WTC11 (cell line): ENCODE measurements at regions of chr15 and their contacts with region 1.

Region 1: DNA sequence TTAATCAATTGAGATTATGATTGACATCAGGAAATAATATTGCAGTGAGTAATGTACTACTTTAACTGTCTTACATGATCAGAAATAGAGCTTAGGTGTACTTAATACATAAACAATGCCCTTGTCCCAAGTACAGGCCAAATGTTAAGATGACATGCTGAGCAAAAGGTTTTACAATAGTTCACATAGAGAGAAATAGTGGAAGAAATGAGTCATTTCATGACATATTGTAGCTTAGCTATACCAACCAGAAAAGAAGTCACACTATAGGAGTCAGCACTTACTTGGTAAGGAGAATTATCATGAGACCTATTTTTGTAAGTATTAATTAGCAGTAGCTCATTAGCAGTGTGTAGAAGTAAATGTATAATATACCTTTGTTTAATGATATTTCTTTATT is 96.4 kb upstream of the NANOGP8 start:
- DNase-seq: no peak
- ATAC-seq: no peak
- H3K4me3 Mint-ChIP-seq: no peak overlapping the region
- H3K27ac Mint-ChIP-seq: no peak overlapping the region; the same call in 1 of the 2 replicates
- H3K4me1 Mint-ChIP-seq: peaks cover 63% of the 10 kb centered on the region
- H3K27me3 Mint-ChIP-seq: peaks cover 11% of the 10 kb centered on the region
- CTCF ChIP-seq: no peak

Region 2: DNA sequence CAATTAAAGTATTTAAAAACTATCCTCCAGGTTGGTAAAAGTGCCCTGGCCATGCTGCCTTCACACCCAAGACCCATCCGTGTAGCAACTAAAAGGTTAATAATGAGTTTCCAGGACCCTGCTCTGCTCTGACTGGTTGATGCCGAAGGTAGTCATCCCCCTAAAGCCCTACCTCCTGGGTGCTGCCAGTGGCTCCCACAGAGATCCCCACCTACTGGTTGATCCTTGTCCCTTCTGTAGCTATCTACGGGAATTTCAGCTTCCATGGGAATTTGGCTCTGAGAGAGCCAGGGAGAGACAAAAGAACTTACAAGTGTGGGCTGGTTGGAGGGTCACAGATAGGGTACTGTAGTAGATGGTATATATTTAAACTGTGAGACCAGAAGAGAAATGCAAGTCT is 14.1 kb after region 1 on chr15:
- CTCF ChIA-PET with region 1: interaction called, 16 read pairs
- POLR2A ChIA-PET with region 1: no interaction called
- DNase-seq: peak; percentile 21
- ATAC-seq: peak; percentile 97
- H3K4me3 Mint-ChIP-seq: no peak overlapping the region
- H3K27ac Mint-ChIP-seq: peak overlapping the region; percentile 46; the same call in 1 of the 2 replicates
- H3K4me1 Mint-ChIP-seq: peaks cover 33% of the 10 kb centered on the region
- H3K27me3 Mint-ChIP-seq: peaks cover 7% of the 10 kb centered on the region; the same call in 1 of the 2 replicates
- CTCF ChIP-seq: no peak

Region 3: DNA sequence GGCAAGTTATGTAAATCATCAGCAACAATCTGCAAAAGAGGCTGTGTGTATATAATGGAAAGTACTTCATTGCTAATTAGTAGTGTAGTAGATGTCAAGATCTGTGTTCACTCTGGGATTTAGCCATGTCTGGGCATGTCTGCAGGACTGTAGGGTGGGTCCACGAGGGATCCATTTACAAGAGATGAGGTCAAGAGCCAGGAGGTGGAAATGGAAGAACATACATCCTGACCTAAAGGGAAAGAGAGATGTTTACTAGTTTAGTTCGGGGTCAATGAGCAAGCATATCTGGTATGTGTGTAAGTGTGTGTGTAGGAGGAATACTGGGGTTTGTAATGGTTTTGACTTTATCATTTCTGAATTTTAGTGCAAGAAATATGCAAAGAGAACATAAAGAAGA is 75.0 kb after region 1 on chr15:
- CTCF ChIA-PET with region 1: no interaction called
- POLR2A ChIA-PET with region 1: no interaction called
- DNase-seq: no peak
- ATAC-seq: no peak
- H3K4me3 Mint-ChIP-seq: no peak overlapping the region
- H3K27ac Mint-ChIP-seq: peak overlapping the region; percentile 89
- H3K4me1 Mint-ChIP-seq: peaks cover 76% of the 10 kb centered on the region
- H3K27me3 Mint-ChIP-seq: no peaks in the 10 kb centered on the region
- CTCF ChIP-seq: no peak

Region 4: DNA sequence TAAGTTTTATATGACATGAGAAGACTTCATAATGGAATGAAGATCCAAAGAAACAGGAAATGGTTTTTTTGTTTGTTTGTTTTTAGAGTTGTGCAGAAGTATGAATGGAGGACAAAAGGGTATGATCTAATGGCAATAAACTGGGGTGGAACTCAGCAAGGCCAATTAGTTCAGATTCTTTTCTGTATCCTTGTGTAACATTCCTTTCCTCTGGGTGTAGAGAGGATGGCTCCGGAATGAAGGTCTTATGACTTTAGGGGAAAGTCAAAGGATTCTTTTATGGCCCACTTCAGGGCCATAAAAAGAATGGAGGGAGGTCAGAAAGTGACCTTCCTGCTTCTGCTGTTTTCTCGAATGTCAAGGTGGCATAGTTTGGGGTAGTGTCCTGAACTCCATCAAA is 211.9 kb after region 1 on chr15:
- CTCF ChIA-PET with region 1: no interaction called
- POLR2A ChIA-PET with region 1: no interaction called
- DNase-seq: no peak
- ATAC-seq: no peak
- H3K4me3 Mint-ChIP-seq: no peak overlapping the region
- H3K27ac Mint-ChIP-seq: no peak overlapping the region
- H3K4me1 Mint-ChIP-seq: no peaks in the 10 kb centered on the region
- H3K27me3 Mint-ChIP-seq: peaks cover 2% of the 10 kb centered on the region; the same call in 1 of the 2 replicates
- CTCF ChIP-seq: no peak